ENCODE measurements at regions of chr2 and their contacts with region 1.

Region 1: DNA sequence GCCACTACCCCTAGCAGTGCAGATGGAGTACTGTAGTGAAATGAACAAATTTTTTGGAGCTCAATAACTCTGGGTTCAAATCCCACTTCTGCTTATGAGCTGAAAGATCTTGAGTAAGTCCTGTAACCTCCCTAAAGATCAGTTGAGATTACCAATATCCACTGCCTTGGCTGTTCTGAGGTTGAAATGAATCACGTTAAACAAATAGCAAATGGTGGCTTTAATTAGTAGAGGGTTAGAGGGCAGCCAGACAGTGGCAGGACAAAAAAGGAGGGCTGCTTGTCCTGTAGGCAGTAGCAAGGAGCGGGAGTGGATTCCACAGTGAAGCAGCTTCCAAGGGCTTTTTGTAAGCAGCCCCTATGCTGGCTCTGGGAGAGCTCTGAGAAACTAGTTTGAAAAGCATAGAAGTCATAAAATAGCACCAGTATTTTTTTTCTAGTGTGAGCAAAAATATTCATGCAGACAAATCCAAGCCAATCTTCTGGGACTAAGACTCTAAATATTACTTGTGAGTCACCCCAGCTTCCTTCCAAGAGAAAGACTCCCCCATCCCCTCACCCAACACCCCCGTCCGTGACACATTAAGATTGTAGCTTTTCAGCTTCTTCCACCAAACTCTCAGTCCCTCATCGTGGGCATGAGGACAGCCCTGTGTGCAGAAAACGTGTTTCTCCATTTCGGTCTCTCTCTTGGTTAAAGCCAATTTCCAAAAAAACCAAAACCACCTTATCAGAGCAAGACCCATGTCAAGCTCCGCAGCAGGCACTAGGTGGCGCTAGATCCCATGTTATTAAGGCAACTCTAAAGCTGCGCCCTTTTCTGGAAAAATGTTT is 123.5 kb upstream of the LGALSL start:
- DNase-seq: peak; percentile 80
- H3K4me3 ChIP-seq: peak overlapping the region; percentile 57
- H3K27ac ChIP-seq: no peak overlapping the region
- H3K27me3 ChIP-seq: no peaks in the 10 kb centered on the region
- CTCF ChIP-seq: peak; percentile 90

Region 2: DNA sequence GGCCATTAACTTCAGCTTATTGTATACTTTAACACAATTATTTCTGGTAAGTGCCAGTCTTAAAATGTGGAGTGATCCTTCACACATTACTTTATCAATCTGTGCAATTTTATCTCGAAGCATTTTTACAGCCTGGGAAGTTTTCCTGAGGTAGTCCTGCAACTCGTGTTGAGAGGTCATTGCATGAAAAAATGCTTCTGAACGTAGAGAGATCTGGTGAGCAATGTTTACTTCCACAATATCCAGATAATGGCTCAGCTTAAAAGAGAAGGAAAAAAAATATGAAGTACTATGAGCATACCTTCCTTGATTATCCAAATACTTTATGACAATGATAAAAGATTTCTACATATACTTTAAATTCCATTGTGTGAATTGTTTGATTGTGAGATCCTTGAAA is 368.3 kb before region 1 on chr2:
- CTCF ChIA-PET with region 1: no interaction called
- POLR2A ChIA-PET with region 1: no interaction called
- DNase-seq: no peak
- H3K4me3 ChIP-seq: no peak overlapping the region
- H3K27ac ChIP-seq: no peak overlapping the region
- H3K27me3 ChIP-seq: no peaks in the 10 kb centered on the region
- CTCF ChIP-seq: no peak

Region 3: DNA sequence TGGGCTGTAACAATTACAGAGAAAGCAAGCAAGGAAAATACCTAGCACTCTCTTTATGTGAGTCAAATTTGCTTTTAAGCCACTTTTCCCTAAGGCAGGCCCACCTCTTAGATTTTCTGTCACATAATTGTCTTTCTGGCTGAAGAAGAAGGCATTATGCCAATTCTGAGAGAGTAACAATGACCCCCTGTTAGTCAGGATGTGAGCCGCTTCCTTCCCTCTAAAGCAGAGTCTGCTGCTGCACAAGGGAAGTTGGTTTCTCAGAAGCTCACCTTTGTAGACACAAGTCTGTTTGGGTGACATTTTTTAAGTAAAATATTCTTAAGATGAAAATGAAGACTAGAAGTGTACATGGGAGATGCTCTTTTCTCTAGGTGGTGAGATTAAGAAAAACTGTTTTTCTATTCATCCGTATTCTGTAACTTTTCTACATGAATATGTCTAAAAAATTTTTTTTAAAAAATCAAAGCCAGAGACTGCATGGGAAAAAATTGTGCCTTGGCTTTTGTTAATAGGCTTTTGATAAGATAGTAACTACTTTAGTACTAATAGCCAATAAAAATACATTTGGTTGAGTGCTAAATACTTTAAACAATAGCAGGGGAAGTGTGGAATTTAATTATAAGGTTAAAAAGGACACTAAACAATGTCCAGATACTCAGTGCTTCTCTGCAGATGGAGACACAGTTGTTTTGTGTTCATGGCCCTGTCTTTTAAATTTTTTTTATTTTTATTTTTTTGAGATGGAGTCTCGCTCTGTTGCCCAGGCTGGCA is 277.8 kb before region 1 on chr2:
- CTCF ChIA-PET with region 1: interaction called, 164 read pairs
- POLR2A ChIA-PET with region 1: interaction called, 4 read pairs
- DNase-seq: no peak
- H3K4me3 ChIP-seq: no peak overlapping the region
- H3K27ac ChIP-seq: no peak overlapping the region
- H3K27me3 ChIP-seq: peaks cover 2% of the 10 kb centered on the region
- CTCF ChIP-seq: no peak

Region 4: DNA sequence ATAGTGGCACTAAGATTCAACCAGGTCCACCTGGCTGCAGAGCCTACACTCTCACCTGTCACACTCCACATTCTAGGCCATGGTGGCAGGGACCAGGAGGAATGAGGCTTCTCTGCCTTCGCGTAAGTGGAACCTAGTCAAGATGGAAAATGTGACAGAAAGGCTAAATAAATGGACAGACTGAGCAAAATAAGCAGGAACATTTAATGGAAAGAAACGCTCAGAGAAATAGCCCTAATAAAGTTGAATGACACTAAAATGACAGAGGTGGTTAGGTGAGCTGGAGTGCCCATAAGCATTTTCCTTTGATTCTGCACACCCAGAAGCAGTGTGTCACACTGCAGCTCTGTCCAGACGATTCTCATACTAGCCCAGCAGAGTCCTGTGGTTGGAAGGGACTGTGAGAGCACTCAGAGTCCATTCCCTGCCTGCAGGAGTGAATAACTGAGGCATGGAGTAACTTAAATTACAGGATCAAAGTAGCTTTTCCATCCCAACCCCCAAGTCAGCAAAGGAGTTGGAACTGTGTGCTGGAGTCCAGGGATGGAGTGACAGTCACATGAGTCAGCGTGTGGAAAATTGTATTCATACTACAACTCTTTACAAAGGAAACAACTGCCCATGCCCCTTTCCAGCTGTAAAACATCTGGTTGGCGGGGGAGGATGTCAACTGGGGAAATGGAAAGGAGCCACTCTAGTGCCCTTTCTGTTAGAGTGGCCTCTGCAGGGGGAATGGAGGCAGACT is 18.1 kb after region 1 on chr2:
- CTCF ChIA-PET with region 1: interaction called, 20 read pairs
- POLR2A ChIA-PET with region 1: no interaction called
- DNase-seq: no peak
- H3K4me3 ChIP-seq: no peak overlapping the region
- H3K27ac ChIP-seq: no peak overlapping the region
- H3K27me3 ChIP-seq: peaks cover 8% of the 10 kb centered on the region
- CTCF ChIP-seq: no peak

Region 5: GRCh38 chr2:64493788-64494187 is 163.3 kb after region 1 on chr2:
- CTCF ChIA-PET with region 1: interaction called, 222 read pairs
- POLR2A ChIA-PET with region 1: no interaction called
- DNase-seq: no peak
- H3K4me3 ChIP-seq: no peak overlapping the region
- H3K27ac ChIP-seq: no peak overlapping the region
- H3K27me3 ChIP-seq: peaks cover 35% of the 10 kb centered on the region
- CTCF ChIP-seq: no peak

Region 6: DNA sequence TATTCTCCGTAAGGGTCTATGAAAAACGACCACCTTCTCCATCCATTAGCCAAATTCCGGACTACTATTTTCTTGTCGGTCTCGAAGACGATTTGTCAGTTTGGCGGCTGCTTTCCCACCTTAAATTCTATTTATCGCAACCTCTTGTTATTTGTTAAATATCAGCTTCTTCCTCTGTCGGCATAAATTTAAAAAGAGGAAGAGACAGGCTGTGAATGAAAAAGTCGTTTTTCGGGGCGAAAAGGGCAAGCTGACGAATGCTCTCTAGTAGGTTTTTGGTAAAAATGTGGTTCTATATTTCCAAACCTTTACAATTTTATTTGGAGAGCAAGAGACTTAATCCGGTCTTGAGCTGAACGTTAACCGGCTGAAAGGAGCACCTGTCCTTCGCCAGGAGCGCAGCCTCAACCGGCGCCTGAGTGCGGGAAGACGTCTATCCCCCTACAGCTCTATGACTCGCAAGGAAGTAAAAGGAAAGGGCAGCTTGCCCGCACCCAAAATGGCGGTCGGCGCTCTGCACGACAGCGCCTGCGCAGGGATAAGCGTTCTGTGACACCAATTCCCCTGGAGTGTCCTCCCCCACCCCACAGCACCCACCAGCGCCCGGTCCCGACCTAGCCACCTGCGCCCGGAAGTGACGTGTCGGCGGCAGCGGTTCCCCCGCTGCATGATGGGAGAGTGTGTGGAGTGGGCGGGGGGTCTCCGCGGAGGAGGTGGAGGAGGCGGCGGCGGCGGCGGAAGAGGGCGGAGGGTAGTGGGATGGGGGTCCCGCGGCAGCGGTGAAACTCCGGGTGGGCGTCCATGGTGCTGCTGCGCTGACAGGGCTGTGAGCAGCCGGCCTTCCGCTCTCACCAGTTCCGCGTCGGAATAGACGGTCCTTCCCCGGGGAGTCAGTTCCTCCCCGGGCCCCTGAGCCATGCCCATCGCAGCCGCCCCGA is 193.4 kb after region 1 on chr2 and contains the start of gene AFTPH:
- CTCF ChIA-PET with region 1: interaction called, 38 read pairs
- POLR2A ChIA-PET with region 1: no interaction called
- DNase-seq: peak; percentile 97
- H3K4me3 ChIP-seq: peak within 1 kb of the TSS; percentile 91
- H3K27ac ChIP-seq: peak within 1 kb of the TSS; percentile 81
- H3K27me3 ChIP-seq: peaks cover 12% of the 10 kb centered on the region
- CTCF ChIP-seq: no peak
- polyA plus RNA-seq, gene AFTPH: 16.8 and 22.0 TPM in 2 replicates

Measured in AG04450 (cell line).